ENCODE measurements at regions of chr7 and their contacts with region 1.

Region 1: GRCh38 chr7:5494683-5495561 is 71.3 kb upstream of the TNRC18 start:
- ATAC-seq: peak; percentile 75 to 90 (median 86)
- H3K4me3 ChIP-seq: no peak overlapping the region
- H3K27ac ChIP-seq: no peak overlapping the region
- H3K4me1 ChIP-seq: peaks cover 2 to 9% of the 10 kb centered on the region in 2 donors

Region 2: GRCh38 chr7:5665094-5666025 is 170.4 kb after region 1 on chr7:
- in situ Hi-C with region 1: loop called in 1 of 9 experiments (anchors 10 kb)
- ATAC-seq: peak; percentile 88 to 96 (median 93)
- H3K4me3 ChIP-seq: no peak overlapping the region
- H3K27ac ChIP-seq: no peak overlapping the region
- H3K4me1 ChIP-seq: peaks cover 0 to 5% of the 10 kb centered on the region in 2 donors

Measured in motor neuron (in vitro differentiated cells).